Body of pancreas (tissue), 4 donors: ENCODE measurements at regions of chr10 and their contacts with region 1.

Region 1: DNA sequence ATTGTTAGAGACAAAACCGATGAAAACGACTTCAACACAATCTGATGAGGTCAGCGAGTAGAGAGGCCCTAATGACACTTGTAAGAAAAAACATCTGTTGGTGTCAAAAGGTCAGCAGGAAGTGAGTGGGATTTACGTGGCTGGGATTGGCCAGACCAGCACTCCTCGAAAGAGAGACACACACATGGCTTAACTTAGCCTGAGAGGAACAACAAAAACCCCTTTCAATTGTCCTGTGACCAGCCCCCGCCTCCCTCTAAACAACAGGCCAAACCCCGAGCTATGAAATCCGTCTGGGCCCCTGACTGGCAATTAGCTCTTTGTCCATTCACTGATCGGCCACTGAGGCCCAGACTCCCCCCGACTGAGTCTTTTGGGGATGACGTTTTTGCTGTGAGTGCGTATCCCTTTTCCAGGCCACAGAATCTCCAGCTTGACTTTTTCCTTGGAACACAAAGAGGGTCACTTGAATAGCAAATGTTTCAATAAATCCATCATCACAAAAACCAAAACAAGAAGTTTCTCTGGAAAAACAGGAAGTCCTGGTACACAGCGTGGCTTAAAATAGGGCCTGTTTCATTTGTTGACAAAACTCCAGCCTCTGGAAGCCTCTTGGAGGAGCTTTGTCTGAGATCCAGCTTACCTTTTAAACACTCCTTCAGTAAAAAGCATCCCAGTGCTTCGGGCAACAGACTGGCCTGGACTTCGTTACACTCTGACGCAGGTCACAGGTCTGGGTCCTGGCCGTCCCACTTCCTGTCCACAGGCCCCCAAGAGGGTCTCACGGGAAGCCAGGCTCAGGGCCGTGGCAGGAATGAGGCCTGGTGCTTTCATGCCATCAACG is 103.0 kb downstream of the CTBP2 start:
- DNase-seq: peak in 1 of 4 donors; percentile 59
- ATAC-seq: peak; percentile 31
- H3K4me3 ChIP-seq: no peak overlapping the region
- H3K27ac ChIP-seq: peak overlapping the region; percentile 21 to 62 (median 45)
- H3K4me1 ChIP-seq: peaks cover 55% of the 10 kb centered on the region
- H3K27me3 ChIP-seq: no peaks in the 10 kb centered on the region
- CTCF ChIP-seq: no peak
- POLR2A ChIP-seq: no peak

Region 2: GRCh38 chr10:124928087-124928486 is 129.3 kb before region 1 on chr10:
- intact Hi-C with region 1: no loop called
- DNase-seq: no peak
- ATAC-seq: no peak
- H3K4me3 ChIP-seq: no peak overlapping the region
- H3K27ac ChIP-seq: no peak overlapping the region
- H3K4me1 ChIP-seq: peaks cover 4% of the 10 kb centered on the region
- H3K27me3 ChIP-seq: no peaks in the 10 kb centered on the region
- CTCF ChIP-seq: no peak
- POLR2A ChIP-seq: no peak

Region 3: DNA sequence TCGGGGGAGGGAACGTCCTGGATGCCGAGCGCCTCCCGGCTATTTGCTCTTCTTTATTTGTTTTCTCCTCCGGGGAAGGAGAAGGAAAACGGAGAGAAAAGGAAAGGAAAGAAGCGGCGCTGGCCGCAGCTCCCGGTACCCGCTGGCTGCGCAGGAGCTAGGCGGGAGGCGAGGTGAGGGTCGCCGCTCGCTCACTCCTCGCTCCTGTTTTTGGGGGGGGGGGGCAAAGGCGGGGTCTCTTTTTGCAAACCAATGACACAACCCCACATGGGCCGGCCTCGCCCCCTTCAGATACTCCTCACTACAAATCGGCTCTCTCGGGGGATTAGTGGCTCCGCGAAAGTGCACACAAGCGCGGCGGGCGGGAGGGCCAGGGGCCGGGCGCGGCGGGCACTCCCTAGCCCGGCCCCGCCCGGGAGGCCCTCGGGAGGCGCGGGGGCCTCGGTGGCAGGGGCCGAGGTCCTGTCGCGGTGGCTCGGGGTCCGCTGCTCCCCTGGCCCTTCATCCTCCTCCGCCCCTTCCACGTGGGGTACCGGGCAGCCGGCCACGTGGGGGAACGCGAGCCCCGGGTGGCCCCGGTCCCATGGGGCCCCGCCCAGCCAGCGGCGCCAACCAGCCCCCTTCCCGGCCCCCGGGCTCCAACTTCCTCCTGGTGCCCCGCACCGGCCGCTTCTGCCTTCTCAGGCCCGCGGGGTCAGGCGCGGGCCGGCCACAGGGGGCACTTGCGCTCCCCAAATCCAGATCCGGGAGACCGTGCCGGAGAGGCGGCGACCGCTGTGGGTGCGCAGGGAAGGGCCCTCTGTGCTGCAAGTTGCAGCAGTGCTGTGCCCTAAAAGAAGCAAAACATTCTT is 103.7 kb after region 1 on chr10:
- intact Hi-C with region 1: loop called (anchors 10 kb)
- DNase-seq: peak; percentile 76 to 84 (median 81)
- ATAC-seq: peak; percentile 51
- H3K4me3 ChIP-seq: peak overlapping the region; percentile 27 to 77
- H3K27ac ChIP-seq: peak overlapping the region; percentile 89 to 100 (median 98)
- H3K4me1 ChIP-seq: peaks cover 26% of the 10 kb centered on the region
- H3K27me3 ChIP-seq: no peaks in the 10 kb centered on the region
- CTCF ChIP-seq: peak; percentile 35 to 70 (median 53)
- POLR2A ChIP-seq: peak; percentile 7 to 47 (median 38)